ENCODE measurements at regions of chr11 and their contacts with region 1.

Region 1: DNA sequence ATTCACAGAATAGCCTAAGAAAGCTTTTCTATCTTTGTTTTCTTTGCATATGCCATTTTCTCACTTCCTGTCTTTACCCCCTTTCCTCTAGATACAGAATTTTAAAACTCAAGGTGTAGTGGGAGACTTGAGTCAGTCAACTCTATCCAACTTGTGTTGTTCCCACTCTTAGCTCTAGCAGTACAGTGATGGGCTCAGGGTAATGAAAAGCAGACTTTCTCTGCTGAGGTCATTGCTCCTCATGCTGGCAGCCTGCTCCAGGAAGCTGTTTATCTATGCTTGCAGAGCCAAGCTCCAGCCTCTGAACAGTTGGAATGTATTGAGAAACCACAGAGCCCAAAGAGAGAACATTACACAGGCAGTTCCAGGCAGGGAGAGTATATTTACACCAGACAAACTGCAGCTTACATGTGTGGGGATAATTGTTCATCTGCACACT is 68.1 kb downstream of the CSTPP1 start:
- DNase-seq: peak; percentile 71
- H3K4me3 ChIP-seq: no peak overlapping the region
- H3K27ac ChIP-seq: peak overlapping the region; percentile 56 to 83 (median 72)
- H3K4me1 ChIP-seq: peaks cover 22 to 50% (median 24%) of the 10 kb centered on the region in 4 donors
- H3K27me3 ChIP-seq: no peaks in the 10 kb centered on the region
- CTCF ChIP-seq: no peak
- EP300 ChIP-seq: peak; percentile 90
- POLR2A ChIP-seq: no peak

Region 2: DNA sequence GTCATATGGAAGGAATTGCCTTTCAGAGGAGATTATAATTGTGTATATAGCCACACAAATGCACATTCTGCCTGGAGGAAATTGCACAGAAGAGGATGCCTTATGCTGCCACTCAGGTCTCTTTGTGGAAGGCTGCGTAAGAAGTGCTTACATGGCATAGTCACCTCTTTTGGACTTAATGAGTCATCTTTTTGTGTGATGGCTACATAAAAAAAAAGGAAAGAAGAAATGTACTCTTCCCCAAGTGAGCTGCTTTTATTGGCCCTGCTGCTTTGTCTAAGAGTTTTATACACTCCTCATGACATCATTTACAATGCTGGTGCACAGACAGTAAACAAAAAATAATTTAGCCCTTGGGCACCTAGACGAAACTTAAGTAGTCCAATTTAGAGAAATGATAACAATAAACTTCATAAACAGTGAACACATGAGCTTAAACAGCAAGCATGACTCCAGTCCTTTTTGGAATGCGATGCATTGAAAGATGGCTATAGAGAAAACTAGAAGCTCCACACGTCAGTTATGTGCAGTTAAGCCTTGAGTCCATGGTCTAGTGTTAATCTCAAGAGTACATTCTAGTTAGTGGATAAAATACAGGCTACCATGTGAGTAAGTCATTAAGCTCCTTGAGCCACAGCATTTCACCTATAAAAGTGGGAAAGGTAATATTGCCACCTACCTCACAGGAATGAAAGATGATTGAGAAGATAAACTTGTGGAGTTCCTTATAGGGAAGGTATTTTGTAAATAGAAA is 56.1 kb before region 1 on chr11:
- in situ Hi-C with region 1: no loop called
- intact Hi-C with region 1: loop called (anchors 2 kb)
- DNase-seq: peak; percentile 26
- H3K4me3 ChIP-seq: no peak overlapping the region
- H3K27ac ChIP-seq: peak overlapping the region; percentile 69 to 83 (median 76)
- H3K4me1 ChIP-seq: peaks cover 10 to 33% (median 18%) of the 10 kb centered on the region in 4 donors
- H3K27me3 ChIP-seq: no peaks in the 10 kb centered on the region
- CTCF ChIP-seq: no peak
- EP300 ChIP-seq: peak; percentile 7
- POLR2A ChIP-seq: no peak